Activated naive CD4-positive, alpha-beta T cell treated with anti-CD3 and anti-CD28 coated beads, Interleukin-2, amount 10 ng/mL, durations not matched to agents 7 days and 5 days (primary cell): ENCODE measurements at regions of chr2 and their contacts with region 1.

Region 1: GRCh38 chr2:127479219-127479825 is 47.0 kb downstream of the IWS1 start:
- DNase-seq: no peak
- H3K4me3 Mint-ChIP-seq: no peak overlapping the region
- H3K27ac Mint-ChIP-seq: no peak overlapping the region
- H3K4me1 Mint-ChIP-seq: no peaks in the 10 kb centered on the region
- H3K27me3 Mint-ChIP-seq: no peaks in the 10 kb centered on the region

Region 2: DNA sequence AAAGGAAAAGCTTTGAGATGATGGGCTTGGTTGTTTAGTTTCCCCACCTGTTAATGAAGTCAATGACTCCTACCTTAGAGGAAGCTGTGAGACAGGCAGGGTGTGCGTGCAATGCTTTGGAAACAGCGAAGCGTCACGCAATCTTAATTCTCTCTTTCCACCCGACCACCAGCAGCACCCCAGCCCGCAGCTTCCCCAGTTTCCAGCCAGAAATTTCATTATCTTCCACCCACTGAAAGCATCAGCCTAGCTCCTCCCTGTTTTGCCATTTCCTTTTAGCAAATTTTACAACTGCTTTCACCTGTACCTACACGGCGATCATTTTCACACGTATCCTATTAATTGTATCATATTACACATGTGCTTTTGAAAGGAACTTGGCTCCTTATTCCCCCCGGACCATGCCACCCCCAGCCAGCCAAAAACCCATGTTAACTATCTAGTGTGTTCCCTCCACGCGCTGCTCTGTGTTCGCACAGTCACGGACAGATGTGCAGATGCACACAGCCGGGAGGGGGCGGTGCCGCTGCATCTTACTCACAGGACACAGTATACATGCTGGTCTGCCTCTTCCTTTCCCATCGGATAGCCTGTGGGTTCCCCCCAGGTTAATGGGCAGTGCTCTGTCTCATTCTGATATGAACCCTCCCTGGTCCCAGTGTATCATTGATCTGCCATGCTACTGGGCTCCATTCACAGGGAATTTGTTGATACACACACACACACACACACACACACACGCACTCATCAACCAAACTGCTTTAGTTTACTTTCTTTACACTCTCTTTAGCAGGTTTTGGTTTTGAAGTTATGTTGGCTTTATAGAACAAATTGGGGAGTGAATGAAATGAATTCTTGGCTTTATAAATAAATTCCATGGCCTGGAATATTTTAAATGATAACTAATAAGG is 281.6 kb before region 1 on chr2:
- CTCF ChIA-PET with region 1: interaction called, 25 read pairs
- DNase-seq: peak; percentile 73
- H3K4me3 Mint-ChIP-seq: peak overlapping the region; percentile 54
- H3K27ac Mint-ChIP-seq: no peak overlapping the region
- H3K4me1 Mint-ChIP-seq: peaks cover 5% of the 10 kb centered on the region
- H3K27me3 Mint-ChIP-seq: peaks cover 9% of the 10 kb centered on the region

Region 3: GRCh38 chr2:127293748-127294562 is 185.4 kb before region 1 on chr2 and contains the start of gene ERCC3:
- CTCF ChIA-PET with region 1: interaction called, 10 read pairs
- DNase-seq: peak; percentile 90
- H3K4me3 Mint-ChIP-seq: peak within 1 kb of the TSS; percentile 98
- H3K27ac Mint-ChIP-seq: peak within 1 kb of the TSS; percentile 89
- H3K4me1 Mint-ChIP-seq: peaks cover 26% of the 10 kb centered on the region
- H3K27me3 Mint-ChIP-seq: no peaks in the 10 kb centered on the region

Region 4: GRCh38 chr2:127324635-127325034 is 154.7 kb before region 1 on chr2:
- CTCF ChIA-PET with region 1: interaction called, 12 read pairs
- DNase-seq: no peak
- H3K4me3 Mint-ChIP-seq: no peak overlapping the region
- H3K27ac Mint-ChIP-seq: no peak overlapping the region
- H3K4me1 Mint-ChIP-seq: no peaks in the 10 kb centered on the region
- H3K27me3 Mint-ChIP-seq: no peaks in the 10 kb centered on the region

Region 5: DNA sequence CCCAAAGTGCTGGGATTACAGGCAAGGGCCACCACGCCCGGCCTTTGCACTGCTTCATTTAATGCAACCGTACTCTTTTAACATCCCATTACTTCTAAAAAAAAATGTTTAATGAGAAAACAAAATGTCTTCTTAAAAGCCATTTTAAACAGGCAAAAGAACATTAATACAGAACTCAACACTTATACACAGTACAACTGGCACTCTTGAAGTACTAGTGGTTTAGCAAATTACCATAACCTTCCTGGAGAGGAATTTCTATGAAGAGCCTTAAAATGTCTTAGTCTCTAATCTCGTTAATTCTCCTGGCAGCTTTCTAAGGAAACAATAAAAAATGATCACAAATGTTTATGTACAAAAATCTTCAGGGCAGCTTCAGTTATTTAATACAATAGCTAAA is 41.1 kb after region 1 on chr2:
- CTCF ChIA-PET with region 1: no interaction called
- DNase-seq: no peak
- H3K4me3 Mint-ChIP-seq: no peak overlapping the region
- H3K27ac Mint-ChIP-seq: no peak overlapping the region
- H3K4me1 Mint-ChIP-seq: peaks cover 31% of the 10 kb centered on the region
- H3K27me3 Mint-ChIP-seq: no peaks in the 10 kb centered on the region